CD8-positive, alpha-beta T cell (primary cell): ENCODE measurements at regions of chr3 and their contacts with region 1.

Region 1: DNA sequence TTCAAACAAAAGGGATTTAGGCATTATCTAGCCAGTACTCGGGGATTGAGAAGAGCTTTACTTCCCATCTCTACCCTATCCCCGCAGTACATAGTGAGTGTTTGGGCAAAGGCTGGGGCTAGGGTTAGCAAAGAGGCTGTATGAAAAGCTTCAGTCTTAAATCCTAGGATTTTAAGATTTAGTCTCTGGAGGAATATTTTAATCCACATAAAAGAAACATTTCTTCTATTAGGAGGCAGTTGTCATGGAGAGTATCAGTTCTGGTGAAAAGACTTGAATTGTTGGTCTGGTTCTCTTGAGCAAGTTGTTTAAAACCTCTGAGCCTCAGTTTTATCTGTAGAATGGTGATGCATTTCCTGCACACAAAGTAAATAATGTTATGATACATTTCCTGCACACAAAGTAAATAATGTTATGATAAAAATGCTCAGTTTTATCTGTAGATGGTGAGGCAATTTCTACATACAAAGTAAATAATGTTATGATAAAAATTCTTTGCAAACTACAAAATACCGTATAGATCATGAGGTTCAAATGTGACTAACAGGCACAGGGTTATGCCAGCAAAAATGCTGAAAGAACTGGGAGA is 53.9 kb upstream of the ZBED2 start:
- DNase-seq: no peak
- ATAC-seq: no peak
- H3K4me3 ChIP-seq: no peak overlapping the region
- H3K4me3 Mint-ChIP-seq: no peak overlapping the region
- H3K27ac ChIP-seq: no peak overlapping the region
- H3K27ac Mint-ChIP-seq: peak overlapping the region; percentile 33
- H3K4me1 ChIP-seq: no peaks in the 10 kb centered on the region
- H3K4me1 Mint-ChIP-seq: peaks cover 2% of the 10 kb centered on the region
- H3K27me3 ChIP-seq: no peaks in the 10 kb centered on the region
- H3K27me3 Mint-ChIP-seq: no peaks in the 10 kb centered on the region
- CTCF ChIP-seq: no peak

Region 2: DNA sequence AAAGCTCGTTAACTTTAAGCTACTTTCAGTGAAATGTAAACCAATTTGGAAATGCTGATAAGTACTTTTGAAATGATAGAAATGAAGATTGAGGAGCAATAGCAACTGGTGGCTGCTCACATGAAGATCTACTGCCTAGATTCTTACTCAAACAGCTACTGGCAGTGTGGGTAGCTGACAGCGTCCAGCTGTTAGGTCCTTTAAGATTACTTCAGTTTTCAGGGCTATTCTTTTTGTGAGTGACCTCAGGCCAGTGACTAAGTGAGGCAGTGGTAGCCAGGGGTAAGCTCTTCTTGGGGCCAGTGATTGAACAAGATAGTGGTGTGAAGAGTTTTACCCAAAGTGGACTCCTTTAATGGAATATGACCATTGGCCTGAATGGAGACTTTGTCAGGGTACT is 536.2 kb before region 1 on chr3:
- CTCF ChIA-PET with region 1: no interaction called
- POLR2A ChIA-PET with region 1: no interaction called
- intact Hi-C with region 1: no loop called
- DNase-seq: no peak
- ATAC-seq: no peak
- H3K4me3 ChIP-seq: no peak overlapping the region
- H3K4me3 Mint-ChIP-seq: no peak overlapping the region
- H3K27ac ChIP-seq: no peak overlapping the region
- H3K27ac Mint-ChIP-seq: no peak overlapping the region
- H3K4me1 ChIP-seq: no peaks in the 10 kb centered on the region
- H3K4me1 Mint-ChIP-seq: no peaks in the 10 kb centered on the region
- H3K27me3 ChIP-seq: no peaks in the 10 kb centered on the region
- H3K27me3 Mint-ChIP-seq: no peaks in the 10 kb centered on the region
- CTCF ChIP-seq: no peak

Region 3: DNA sequence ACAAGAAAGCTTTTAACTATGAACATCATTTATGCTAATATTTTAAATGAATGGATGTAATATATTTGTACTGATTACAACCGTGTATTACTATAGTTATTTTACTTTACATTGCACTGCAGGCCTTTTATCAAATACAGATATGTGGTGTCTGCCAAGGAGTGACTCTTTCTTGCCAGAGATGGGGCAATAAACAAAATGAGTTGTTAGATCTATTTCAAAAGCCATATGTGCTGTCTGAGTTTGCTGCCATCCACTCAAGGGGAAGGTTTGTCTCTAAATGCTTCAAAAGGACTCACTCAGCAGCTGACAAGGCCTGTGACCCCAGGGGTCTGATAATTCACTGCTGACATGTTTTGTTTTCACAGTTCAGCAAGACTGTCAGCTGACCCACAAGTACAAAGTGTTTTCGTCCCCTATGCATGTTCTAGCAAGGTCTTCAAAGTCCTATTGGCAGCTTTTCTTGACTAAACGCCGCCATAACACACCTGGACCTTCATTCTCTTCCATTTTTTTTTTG is 12.7 kb before region 1 on chr3:
- CTCF ChIA-PET with region 1: no interaction called
- POLR2A ChIA-PET with region 1: no interaction called
- intact Hi-C with region 1: loop called in 1 of 2 experiments (anchors 2 kb)
- DNase-seq: no peak
- ATAC-seq: no peak
- H3K4me3 ChIP-seq: no peak overlapping the region
- H3K4me3 Mint-ChIP-seq: no peak overlapping the region
- H3K27ac ChIP-seq: no peak overlapping the region
- H3K27ac Mint-ChIP-seq: peak overlapping the region; percentile 47
- H3K4me1 ChIP-seq: no peaks in the 10 kb centered on the region
- H3K4me1 Mint-ChIP-seq: peaks cover 2% of the 10 kb centered on the region
- H3K27me3 ChIP-seq: no peaks in the 10 kb centered on the region
- H3K27me3 Mint-ChIP-seq: no peaks in the 10 kb centered on the region
- CTCF ChIP-seq: no peak